Left colon (tissue), 2 donors: ENCODE measurements at regions of chr2 and their contacts with region 1.

Region 1: GRCh38 chr2:132547074-132547687 is 122.8 kb downstream of the LYPD1 start:
- DNase-seq: peak; percentile 42 to 81
- ATAC-seq: peak; percentile 76

Region 2: DNA sequence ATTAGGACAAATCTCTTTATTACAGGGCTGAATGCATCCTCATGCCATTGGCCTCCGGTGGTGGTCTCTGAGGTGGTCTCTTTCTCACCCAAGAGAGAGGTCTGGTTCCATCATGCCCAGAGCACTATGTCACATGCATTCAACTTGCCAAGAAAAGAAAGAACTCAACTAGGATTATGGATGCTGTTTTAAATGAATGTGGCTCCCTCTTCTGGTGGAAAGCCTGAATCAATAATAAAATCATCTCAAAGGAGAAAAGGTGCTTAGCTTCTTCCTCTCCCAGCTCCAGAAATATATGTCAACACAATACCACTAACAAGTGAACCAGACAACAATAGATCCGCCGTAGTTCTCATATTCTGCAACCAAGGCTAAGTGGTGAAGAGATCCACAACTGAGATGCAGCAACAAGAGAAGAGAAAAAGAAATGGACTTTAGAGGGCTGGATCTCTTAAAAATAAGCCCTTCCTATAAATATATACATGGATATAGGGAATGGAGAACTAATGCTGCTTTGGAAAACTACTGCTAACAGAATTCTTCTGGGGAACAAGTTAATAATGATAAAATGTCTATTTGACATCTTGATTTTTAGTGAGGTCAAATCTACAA is 624.3 kb after region 1 on chr2:
- intact Hi-C with region 1: loop called in 1 of 2 experiments (anchors 5 kb)
- DNase-seq: no peak
- ATAC-seq: peak; percentile 66

Region 3: DNA sequence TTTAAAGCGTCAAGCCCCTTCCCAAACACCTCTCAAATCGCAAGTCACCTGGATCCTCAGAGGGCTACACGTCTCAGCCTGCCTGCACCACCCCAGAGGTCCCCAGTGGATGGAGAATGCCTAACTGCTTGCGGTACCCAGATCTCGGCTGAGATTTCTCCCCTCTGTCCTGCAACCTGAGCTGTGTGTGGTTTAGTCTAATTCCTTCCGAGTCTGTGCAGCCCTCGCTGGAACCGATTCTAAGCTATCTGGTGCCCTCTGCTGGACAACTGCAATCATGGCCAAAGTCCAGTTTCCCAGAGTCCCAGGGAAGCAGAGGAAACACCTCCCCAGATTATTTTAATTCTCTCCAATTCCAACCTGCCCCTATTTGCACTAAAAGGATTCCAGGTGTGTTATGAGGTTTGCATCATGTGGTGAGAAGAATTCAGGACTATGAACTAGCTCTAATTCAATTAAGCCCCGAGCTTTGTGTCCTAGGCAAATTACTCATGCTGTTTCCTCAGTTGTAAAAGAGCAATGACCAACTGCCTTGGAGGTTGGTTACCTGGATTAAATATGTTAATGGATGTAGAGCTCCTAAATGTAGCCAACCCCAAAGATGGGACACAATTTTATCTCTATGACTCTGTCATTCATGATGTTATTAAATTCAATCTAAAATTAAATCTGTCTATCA is 1297.2 kb after region 1 on chr2:
- intact Hi-C with region 1: loop called in 1 of 2 experiments (anchors 5 kb)
- DNase-seq: peak; percentile 40 to 64
- ATAC-seq: peak; percentile 92